Endothelial cell of umbilical vein (primary cell): ENCODE measurements at regions of chr1 and their contacts with region 1.

Region 1: DNA sequence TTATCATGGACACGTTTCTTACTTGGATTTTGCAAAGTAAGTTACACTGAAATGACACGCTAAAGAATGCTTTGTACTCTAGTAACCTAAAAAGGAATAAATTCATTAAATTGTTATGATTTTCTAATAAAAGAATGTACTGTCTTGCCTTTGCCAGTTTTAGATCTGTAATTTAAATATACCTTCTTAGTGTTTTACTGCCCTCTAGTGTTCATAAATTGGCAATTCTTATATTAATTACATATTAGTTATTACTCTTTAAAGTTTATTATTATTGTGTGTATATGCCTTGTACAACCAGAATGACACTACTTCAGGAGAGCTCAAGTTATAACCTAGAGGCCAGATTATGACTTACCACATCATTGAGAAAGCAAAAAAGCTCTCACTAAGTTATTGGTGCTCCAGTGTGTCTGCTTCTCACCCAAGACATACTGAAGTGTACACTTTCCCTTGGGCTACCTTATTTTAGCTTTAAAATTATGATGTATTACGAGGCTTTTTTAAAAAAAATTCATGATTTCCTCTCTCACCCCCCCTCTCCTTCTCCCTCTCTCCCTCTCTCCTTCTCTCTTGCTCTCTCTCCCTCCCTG is 169.9 kb downstream of the HS2ST1 start:
- DNase-seq: peak; percentile 41
- H3K4me3 ChIP-seq: no peak overlapping the region
- H3K27ac ChIP-seq: no peak overlapping the region
- H3K4me1 ChIP-seq: no peaks in the 10 kb centered on the region
- H3K27me3 ChIP-seq: no peaks in the 10 kb centered on the region
- CTCF ChIP-seq: no peak
- POLR2A ChIP-seq: no peak

Region 2: GRCh38 chr1:86470859-86471258 is 613.5 kb before region 1 on chr1:
- CTCF ChIA-PET with region 1: no interaction called
- POLR2A ChIA-PET with region 1: no interaction called
- dilution Hi-C with region 1: no loop called
- intact Hi-C with region 1: loop called (anchors 10 kb)
- DNase-seq: no peak
- H3K4me3 ChIP-seq: no peak overlapping the region
- H3K27ac ChIP-seq: no peak overlapping the region
- H3K4me1 ChIP-seq: peaks cover 3% of the 10 kb centered on the region
- H3K27me3 ChIP-seq: peaks cover 2 to 3% of the 10 kb centered on the region in 2 experiments
- CTCF ChIP-seq: no peak
- POLR2A ChIP-seq: no peak

Region 3: GRCh38 chr1:86782482-86782881 is 301.9 kb before region 1 on chr1:
- CTCF ChIA-PET with region 1: interaction called, 68 read pairs
- POLR2A ChIA-PET with region 1: no interaction called
- dilution Hi-C with region 1: no loop called
- intact Hi-C with region 1: loop called (anchors 1 kb)
- DNase-seq: no peak
- H3K4me3 ChIP-seq: no peak overlapping the region
- H3K27ac ChIP-seq: no peak overlapping the region
- H3K4me1 ChIP-seq: peaks cover 23% of the 10 kb centered on the region
- H3K27me3 ChIP-seq: no peaks in the 10 kb centered on the region
- CTCF ChIP-seq: no peak
- POLR2A ChIP-seq: no peak

Region 4: GRCh38 chr1:86913896-86914634 is 170.3 kb before region 1 on chr1 and contains the start of gene SELENOF:
- CTCF ChIA-PET with region 1: interaction called, 26 read pairs
- POLR2A ChIA-PET with region 1: no interaction called
- dilution Hi-C with region 1: no loop called
- intact Hi-C with region 1: loop called (anchors 5 kb)
- DNase-seq: peak; percentile 100
- H3K4me3 ChIP-seq: peak within 1 kb of the TSS; percentile 84 to 100 (median 99)
- H3K27ac ChIP-seq: peak within 1 kb of the TSS; percentile 100
- H3K4me1 ChIP-seq: peaks cover 16% of the 10 kb centered on the region
- H3K27me3 ChIP-seq: no peaks in the 10 kb centered on the region
- CTCF ChIP-seq: no peak
- POLR2A ChIP-seq: peak; percentile 86
- total RNA-seq, gene SELENOF: 202 and 205 TPM in 2 replicates

Region 5: DNA sequence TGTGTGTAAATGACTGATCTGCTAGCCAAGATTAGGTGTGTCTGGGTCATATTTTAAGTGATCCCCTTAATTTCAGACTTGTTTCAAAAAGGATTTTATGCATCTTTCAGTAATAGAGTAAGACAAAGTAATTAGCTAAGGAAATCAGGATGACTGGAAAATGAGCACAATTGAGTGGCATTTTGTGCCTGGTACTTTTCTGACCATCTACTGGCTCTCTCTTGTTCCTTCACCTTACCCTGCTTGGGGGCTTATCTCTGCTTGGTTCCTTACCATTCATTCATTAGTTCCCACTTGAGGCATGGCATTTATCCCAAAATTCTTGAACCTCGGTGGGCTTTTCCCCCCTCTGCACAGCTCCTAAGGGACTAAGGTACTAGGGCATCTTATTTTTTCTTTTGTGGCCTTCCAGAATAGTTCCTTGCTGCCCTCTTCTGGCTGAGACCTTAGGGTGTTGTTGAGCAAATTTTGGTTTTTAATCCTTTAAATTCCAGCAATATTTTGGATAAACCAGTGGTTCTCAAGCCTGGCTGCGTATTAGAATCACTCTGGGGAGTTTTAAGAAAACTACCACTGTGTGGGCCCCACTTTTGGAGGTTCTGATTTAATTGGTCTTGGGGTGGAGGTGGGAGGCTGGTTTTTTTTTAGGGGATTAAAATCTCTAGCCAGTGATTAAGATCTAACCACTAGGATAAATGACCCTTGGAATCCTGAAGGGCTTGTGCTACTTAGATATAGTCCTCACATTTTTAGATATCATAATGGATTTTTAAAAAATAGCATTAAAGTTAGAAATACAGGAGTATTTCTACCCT is 119.1 kb before region 1 on chr1:
- CTCF ChIA-PET with region 1: interaction called, 31 read pairs
- POLR2A ChIA-PET with region 1: no interaction called
- dilution Hi-C with region 1: no loop called
- intact Hi-C with region 1: loop called (anchors 1 kb)
- DNase-seq: peak; percentile 56
- H3K4me3 ChIP-seq: no peak overlapping the region
- H3K27ac ChIP-seq: no peak overlapping the region
- H3K4me1 ChIP-seq: no peaks in the 10 kb centered on the region
- H3K27me3 ChIP-seq: no peaks in the 10 kb centered on the region
- CTCF ChIP-seq: peak; percentile 61 to 63
- POLR2A ChIP-seq: no peak

Region 6: GRCh38 chr1:87024936-87025540 is 59.3 kb before region 1 on chr1:
- CTCF ChIA-PET with region 1: interaction called, 3 read pairs
- POLR2A ChIA-PET with region 1: no interaction called
- dilution Hi-C with region 1: no loop called
- intact Hi-C with region 1: loop called (anchors 5 kb)
- DNase-seq: peak; percentile 56
- H3K4me3 ChIP-seq: no peak overlapping the region
- H3K27ac ChIP-seq: no peak overlapping the region
- H3K4me1 ChIP-seq: peaks cover 23% of the 10 kb centered on the region
- H3K27me3 ChIP-seq: no peaks in the 10 kb centered on the region
- CTCF ChIP-seq: peak; percentile 35 to 46
- POLR2A ChIP-seq: no peak

Region 7: DNA sequence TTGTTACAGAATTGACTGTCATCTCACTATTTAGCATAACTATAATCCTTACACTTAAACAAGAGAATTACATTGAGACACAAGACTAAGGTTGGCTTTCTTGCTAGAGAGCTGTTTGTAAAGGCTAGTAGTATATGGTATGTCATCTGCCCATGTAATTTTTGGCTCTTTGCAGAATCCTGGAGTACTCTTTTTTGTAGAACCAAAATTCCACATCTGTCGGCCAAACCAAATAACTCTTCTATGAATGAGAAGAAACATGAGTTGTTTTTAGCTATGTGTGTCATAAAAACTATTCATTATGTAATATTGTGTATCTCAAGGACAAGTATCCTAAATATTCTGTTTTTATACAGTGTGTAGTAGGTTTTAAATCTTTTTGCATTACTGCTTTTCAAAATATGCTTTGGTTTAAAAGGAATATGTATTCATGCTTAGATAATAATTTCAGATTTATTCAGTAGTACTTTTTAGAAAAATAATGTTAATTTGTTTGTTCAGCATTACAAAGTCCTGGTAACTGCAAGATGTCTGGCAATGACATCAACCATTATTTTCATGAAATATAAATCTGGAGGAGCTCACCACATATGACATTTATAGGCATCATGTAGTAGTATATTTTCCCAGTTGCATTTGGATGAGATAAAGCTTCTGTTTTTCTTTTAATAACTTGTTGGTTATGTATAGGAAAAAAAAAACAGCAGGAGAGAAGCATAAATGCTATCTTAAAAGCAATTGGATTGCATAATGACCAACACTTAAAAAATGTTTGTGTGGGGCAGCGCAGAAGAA is 10.1 kb before region 1 on chr1:
- CTCF ChIA-PET with region 1: interaction called, 15 read pairs
- POLR2A ChIA-PET with region 1: no interaction called
- dilution Hi-C with region 1: no loop called
- intact Hi-C with region 1: no loop called
- DNase-seq: no peak
- H3K4me3 ChIP-seq: no peak overlapping the region
- H3K27ac ChIP-seq: no peak overlapping the region
- H3K4me1 ChIP-seq: no peaks in the 10 kb centered on the region
- H3K27me3 ChIP-seq: no peaks in the 10 kb centered on the region
- CTCF ChIP-seq: no peak
- POLR2A ChIP-seq: no peak

Region 8: DNA sequence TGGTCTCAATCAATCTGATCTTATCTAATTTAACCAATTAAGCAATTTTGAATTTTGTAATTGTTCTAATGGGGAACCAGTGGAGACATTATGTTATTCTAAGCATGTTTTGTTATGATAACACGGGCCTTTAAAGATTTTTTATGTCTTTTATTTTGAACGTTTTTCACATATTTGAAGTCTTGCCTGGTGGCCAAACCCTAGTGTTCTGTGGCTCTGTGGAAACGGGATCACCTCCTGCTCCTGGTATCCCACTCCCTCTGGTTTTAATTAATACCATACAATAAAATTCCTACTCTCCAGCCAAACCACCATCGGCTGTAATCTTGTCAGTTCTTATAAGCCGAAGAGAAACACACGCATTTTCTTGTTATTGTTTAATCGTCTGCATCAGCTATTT is 221.4 kb after region 1 on chr1:
- CTCF ChIA-PET with region 1: no interaction called
- POLR2A ChIA-PET with region 1: no interaction called
- dilution Hi-C with region 1: no loop called
- intact Hi-C with region 1: no loop called
- DNase-seq: no peak
- H3K4me3 ChIP-seq: no peak overlapping the region
- H3K27ac ChIP-seq: no peak overlapping the region
- H3K4me1 ChIP-seq: no peaks in the 10 kb centered on the region
- H3K27me3 ChIP-seq: peaks cover 5 to 18% of the 10 kb centered on the region in 2 experiments
- CTCF ChIP-seq: no peak
- POLR2A ChIP-seq: no peak